ENCODE measurements at regions of chr1 and their contacts with region 1.

Region 1: DNA sequence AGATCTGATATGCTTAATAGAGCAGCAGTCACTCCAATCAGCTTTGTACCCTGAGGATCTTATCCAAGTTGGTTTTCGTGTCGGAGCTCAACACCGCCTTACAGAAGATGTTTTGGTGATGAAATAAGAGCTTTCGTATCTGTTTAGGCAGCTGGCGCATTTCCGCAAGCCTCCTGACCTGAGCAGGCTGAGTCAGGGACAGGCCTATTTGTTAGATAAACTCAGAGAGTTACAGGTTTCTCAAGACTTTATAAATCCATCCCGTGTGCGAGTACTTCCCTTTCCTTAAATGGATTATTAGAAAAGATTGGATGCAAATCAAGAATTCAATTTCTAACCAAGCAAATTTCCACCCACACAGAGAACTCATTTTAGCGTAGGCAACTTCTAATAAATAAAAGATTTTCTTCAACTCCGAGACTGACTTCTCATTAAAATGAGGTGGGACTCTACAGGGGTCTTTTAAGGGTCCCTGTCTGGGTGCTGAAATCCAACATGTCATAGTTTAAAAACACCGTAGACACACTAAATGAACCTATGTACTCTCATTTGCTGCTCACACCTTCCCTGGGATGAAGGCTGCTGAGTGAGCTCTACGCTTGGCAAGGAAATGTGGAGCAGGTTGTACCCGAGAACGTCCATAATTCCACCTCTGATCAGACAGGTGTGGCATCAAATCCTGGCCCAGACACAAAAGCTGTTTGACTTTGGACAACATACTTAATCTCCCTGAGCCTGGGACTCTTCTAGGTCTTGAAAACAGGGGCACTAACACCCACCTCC is 106.9 kb upstream of the F3 start:
- DNase-seq: peak in 5 of 6 donors; percentile 78 to 87 (median 82)
- ATAC-seq: peak; percentile 93 to 96 (median 94)
- H3K4me3 ChIP-seq: no peak overlapping the region
- H3K27ac ChIP-seq: peak overlapping the region; percentile 4 to 83 (median 47)
- H3K4me1 ChIP-seq: peaks cover 2 to 20% (median 9%) of the 10 kb centered on the region in 3 donors
- H3K27me3 ChIP-seq: no peaks in the 10 kb centered on the region
- CTCF ChIP-seq: no peak

Region 2: GRCh38 chr1:94541175-94542087 is 107.0 kb before region 1 on chr1 and contains the start of gene F3:
- intact Hi-C with region 1: loop called in 1 of 3 experiments (anchors 10 kb)
- DNase-seq: peak; percentile 95 to 98 (median 96)
- ATAC-seq: peak; percentile 87 to 94 (median 94)
- H3K4me3 ChIP-seq: peak within 1 kb of the TSS; percentile 81 to 98 (median 93)
- H3K27ac ChIP-seq: peak within 1 kb of the TSS; percentile 79 to 95 (median 90)
- H3K4me1 ChIP-seq: peaks cover 14 to 29% (median 22%) of the 10 kb centered on the region in 3 donors
- H3K27me3 ChIP-seq: no peaks in the 10 kb centered on the region
- CTCF ChIP-seq: no peak
- total RNA-seq, gene F3: 14.8 to 117 (median 43.2) TPM

Region 3: GRCh38 chr1:94773931-94774422 is 125.6 kb after region 1 on chr1:
- intact Hi-C with region 1: loop called in 1 of 3 experiments (anchors 10 kb)
- DNase-seq: peak; percentile 75 to 86 (median 81)
- ATAC-seq: peak; percentile 74 to 84 (median 80)
- H3K4me3 ChIP-seq: no peak overlapping the region
- H3K27ac ChIP-seq: peak overlapping the region; percentile 36 to 87 (median 72)
- H3K4me1 ChIP-seq: peaks cover 58 to 65% (median 60%) of the 10 kb centered on the region in 3 donors
- H3K27me3 ChIP-seq: no peaks in the 10 kb centered on the region
- CTCF ChIP-seq: no peak

Region 4: DNA sequence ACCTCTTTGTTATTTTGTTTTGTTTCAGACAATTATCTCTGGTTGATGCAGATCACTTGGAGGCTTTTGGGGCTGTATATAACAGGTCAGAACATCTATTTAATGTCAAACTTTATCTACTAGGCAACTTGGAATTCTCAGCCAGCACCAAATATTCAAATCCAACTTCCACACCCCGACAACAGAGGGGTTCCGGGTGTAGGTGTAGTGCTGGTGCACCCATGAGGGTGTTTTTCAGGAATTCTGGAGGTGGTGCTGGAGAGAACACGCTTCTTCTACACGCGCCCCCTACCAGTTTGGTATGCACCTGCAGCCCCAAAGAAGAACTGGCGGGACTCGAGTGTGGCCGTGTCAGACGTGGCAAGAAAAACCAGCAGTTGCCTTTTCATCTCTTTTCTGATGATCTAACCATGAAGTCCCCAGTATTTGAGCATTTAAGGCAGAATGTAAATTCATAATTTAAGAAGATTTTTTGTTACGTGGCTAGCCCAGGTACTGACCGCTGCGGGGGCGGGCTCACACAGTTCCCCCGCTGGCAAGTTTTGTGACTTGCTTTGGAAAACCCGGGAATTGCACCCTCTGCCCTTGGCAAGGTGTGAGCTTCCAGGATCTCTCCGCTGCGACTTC is 468.3 kb after region 1 on chr1:
- intact Hi-C with region 1: no loop called
- DNase-seq: peak; percentile 72 to 82 (median 78)
- ATAC-seq: peak; percentile 82 to 92 (median 86)
- H3K4me3 ChIP-seq: peak overlapping the region; percentile 70 to 90 (median 83)
- H3K27ac ChIP-seq: peak overlapping the region; percentile 84 to 92 (median 86)
- H3K4me1 ChIP-seq: peaks cover 0 to 8% (median 8%) of the 10 kb centered on the region in 3 donors
- H3K27me3 ChIP-seq: no peaks in the 10 kb centered on the region
- CTCF ChIP-seq: peak; percentile 38 to 60 (median 52)